ENCODE measurements at regions of chr12 and their contacts with region 1.

Region 1: GRCh38 chr12:11486623-11487444 is 91.5 kb upstream of the PRB2 start:
- DNase-seq: peak; percentile 93
- H3K4me3 Mint-ChIP-seq: no peak overlapping the region
- H3K27ac Mint-ChIP-seq: no peak overlapping the region
- H3K4me1 Mint-ChIP-seq: peaks cover 4% of the 10 kb centered on the region
- H3K27me3 Mint-ChIP-seq: peaks cover 3% of the 10 kb centered on the region

Region 2: DNA sequence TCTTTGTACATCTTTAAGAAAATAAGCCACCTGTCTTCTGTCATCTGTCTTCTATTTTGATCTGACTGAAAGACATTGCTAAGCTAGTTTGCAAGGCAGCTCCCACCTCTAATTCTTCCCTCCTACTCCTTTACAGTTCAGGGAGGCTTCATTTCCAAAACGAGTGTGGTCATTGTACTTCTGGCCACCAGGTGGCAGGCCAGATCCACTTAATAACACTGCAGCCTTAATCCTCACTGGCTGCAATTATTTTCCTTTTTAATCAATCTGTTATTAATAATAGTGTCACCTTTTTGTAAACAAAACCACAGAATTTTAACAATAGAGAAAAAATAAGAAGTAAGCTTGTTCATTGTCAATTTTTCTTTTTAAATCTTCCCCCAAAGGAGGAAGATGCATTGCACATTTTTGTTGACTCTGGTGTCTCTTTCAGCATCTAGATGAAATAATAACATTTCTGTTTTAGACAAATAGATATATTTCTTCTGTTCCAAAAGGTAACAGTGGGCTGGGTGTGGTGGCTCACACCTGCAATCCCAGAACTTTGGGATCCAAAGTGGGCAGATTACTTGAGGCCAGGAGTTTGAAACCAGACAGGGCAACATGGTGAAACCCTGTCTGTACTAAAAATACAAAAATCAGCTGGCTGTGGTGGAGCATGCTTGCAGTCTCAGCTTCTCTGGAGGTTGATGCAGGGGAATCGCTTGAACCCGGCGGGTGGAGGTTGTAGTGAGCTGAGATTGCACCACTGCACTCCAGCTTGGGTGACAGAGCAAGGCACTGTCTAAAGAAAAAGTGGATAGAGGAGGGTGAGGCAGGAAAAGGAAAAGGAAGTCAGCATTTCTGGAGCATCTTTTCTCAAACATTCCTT is 1250.8 kb before region 1 on chr12:
- CTCF ChIA-PET with region 1: no interaction called
- intact Hi-C with region 1: loop called (anchors 1 kb)
- DNase-seq: peak; percentile 43
- H3K4me3 Mint-ChIP-seq: no peak overlapping the region
- H3K27ac Mint-ChIP-seq: no peak overlapping the region
- H3K4me1 Mint-ChIP-seq: no peaks in the 10 kb centered on the region
- H3K27me3 Mint-ChIP-seq: no peaks in the 10 kb centered on the region

Region 3: DNA sequence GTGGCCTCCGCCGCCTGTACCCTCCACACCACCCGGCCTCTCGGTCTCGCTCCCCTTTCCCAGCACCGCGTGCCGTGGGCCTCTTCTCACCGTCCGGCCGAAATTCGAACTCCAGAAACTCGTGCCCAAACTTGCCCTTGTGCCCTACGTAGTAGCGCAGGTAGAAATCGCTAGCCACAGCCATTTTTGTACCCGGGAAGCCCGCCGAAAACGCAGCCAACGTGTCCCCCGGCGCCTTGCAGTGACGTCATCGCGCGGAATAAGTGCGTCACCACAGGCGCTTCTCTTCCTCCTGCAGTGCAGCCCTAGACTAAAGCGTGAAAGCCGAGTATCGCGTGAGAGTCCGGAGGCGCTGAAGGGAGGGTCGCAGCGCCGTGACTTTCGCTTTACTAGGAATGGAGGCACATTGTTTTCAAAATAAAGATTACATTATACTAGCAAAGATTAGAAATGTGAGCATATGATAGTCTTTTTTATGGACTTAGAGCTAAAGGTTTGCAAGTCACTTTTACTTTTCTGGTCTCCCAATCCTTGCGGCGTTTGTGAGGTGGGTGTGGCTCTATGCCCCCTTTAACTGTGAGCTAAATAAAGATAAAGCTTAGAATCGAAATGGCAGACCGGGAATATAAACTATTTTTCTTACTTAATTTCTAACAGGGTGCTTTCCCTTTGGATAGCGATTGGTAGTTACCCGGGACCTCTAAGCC is 873.3 kb before region 1 on chr12 and contains the start of gene MAGOHB:
- CTCF ChIA-PET with region 1: no interaction called
- intact Hi-C with region 1: loop called (anchors 10 kb)
- DNase-seq: peak; percentile 99
- H3K4me3 Mint-ChIP-seq: peak within 1 kb of the TSS; percentile 99
- H3K27ac Mint-ChIP-seq: peak within 1 kb of the TSS; percentile 99
- H3K4me1 Mint-ChIP-seq: peaks cover 30% of the 10 kb centered on the region
- H3K27me3 Mint-ChIP-seq: peaks cover 2% of the 10 kb centered on the region
- total RNA-seq, gene MAGOHB: 58.8 to 61.1 TPM

Region 4: GRCh38 chr12:10959804-10960203 is 527.0 kb before region 1 on chr12:
- CTCF ChIA-PET with region 1: no interaction called
- intact Hi-C with region 1: loop called (anchors 1 kb)
- DNase-seq: peak; percentile 10
- H3K4me3 Mint-ChIP-seq: no peak overlapping the region
- H3K27ac Mint-ChIP-seq: no peak overlapping the region
- H3K4me1 Mint-ChIP-seq: peaks cover 22% of the 10 kb centered on the region
- H3K27me3 Mint-ChIP-seq: no peaks in the 10 kb centered on the region

Region 5: DNA sequence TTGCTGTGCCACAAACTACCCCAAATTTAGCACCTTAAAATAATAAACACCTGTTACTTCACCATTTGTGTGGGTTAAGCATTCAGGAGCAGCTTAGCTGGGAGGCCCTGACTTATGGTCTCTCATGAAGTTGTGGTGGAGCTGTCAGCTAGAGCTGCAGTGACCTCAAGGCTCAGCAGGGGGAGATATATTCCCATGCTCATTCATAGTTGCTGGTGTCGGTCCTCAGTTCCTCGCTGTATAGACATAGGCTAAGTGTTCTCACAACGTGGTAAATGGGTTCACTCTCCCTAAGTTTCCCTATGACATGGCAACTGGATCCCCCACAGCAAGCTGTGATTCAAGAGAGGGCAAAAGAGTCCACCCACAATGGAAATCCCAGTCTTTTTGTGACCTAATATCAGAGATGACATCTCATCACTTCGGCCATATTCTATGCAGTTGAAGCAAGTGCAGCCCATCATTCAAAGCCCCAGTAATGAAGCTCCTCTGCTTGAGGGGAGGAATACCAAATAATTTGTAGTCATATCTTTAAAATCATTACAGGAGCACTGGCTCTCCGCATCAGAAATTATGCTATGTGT is 258.4 kb before region 1 on chr12:
- CTCF ChIA-PET with region 1: interaction called, 59 read pairs
- intact Hi-C with region 1: loop called (anchors 1 kb)
- DNase-seq: peak; percentile 67
- H3K4me3 Mint-ChIP-seq: no peak overlapping the region
- H3K27ac Mint-ChIP-seq: no peak overlapping the region
- H3K4me1 Mint-ChIP-seq: no peaks in the 10 kb centered on the region
- H3K27me3 Mint-ChIP-seq: no peaks in the 10 kb centered on the region

Region 6: GRCh38 chr12:12056951-12057350 is 570.1 kb after region 1 on chr12:
- CTCF ChIA-PET with region 1: no interaction called
- intact Hi-C with region 1: no loop called
- DNase-seq: no peak
- H3K4me3 Mint-ChIP-seq: no peak overlapping the region
- H3K27ac Mint-ChIP-seq: no peak overlapping the region
- H3K4me1 Mint-ChIP-seq: no peaks in the 10 kb centered on the region
- H3K27me3 Mint-ChIP-seq: no peaks in the 10 kb centered on the region

Measured in activated naive CD4-positive, alpha-beta T cell treated with anti-CD3 and anti-CD28 coated beads for 36 hours (primary cell).